K562 (cell line): ENCODE measurements at regions of chr6 and their contacts with region 1.

Region 1: DNA sequence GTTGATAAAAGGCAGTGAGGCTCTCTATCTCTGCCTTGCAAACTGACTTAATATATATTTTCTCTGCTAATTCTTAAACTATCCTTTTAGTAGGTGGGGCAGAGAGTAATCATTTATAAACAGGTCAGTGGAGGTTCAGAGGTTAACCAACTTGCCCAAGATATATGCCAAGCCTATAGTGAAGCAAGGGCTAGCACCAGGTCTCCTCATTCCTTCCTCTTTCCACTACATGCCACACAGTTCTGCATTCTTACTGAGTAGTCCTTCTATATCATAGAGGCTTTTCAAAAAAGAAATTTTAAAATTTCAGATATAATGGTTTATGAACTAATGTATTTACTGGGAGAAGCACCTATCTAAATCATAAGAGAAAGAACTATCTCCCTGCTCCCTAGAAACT is 8.5 kb downstream of the ARG1 start:
- DNase-seq: no peak
- ATAC-seq: no peak
- H3K4me3 ChIP-seq: no peak overlapping the region
- H3K27ac ChIP-seq: no peak overlapping the region
- H3K4me1 ChIP-seq: no peaks in the 10 kb centered on the region
- H3K27me3 ChIP-seq: no peaks in the 10 kb centered on the region
- CTCF ChIP-seq: no peak
- EP300 ChIP-seq: no peak
- POLR2A ChIP-seq: no peak
- RAD21 ChIP-seq: no peak

Region 2: DNA sequence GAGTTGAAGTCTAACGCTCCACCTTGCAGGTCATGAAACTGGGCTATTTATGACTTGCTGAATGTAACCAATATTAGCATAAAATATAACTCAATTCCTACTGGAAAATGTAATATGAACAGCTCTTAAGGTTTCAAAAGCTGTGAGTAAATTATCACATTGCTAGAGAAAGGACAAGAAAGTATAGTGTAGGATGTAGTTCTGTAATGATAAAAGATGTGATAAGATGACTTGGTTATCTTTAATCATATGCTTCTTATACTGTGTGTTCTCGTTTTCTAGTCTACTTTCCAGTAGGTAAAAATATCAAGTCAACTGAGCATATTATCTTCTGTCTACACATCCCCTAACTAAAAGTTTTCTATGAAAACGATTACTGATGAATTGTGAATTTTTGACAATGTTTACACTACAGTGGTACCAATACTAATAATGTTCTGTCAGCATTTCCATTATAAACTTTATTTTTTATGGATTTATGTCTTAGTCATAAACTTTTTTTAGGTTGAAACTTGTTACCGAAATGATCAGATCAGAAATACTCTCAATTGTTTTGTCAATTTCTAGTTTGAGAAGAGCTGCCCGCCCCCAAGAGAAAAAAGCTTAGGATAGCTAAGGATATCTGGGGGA is 31.9 kb after region 1 on chr6:
- CTCF ChIA-PET with region 1: no interaction called
- POLR2A ChIA-PET with region 1: no interaction called
- in situ Hi-C with region 1: no loop called
- intact Hi-C with region 1: loop called (anchors 5 kb)
- DNase-seq: no peak
- ATAC-seq: no peak
- H3K4me3 ChIP-seq: no peak overlapping the region
- H3K27ac ChIP-seq: no peak overlapping the region
- H3K4me1 ChIP-seq: no peaks in the 10 kb centered on the region
- H3K27me3 ChIP-seq: no peaks in the 10 kb centered on the region
- CTCF ChIP-seq: no peak
- EP300 ChIP-seq: no peak
- POLR2A ChIP-seq: no peak
- RAD21 ChIP-seq: no peak